Right ventricle myocardium inferior (tissue), 1 donor: ENCODE measurements at regions of chr14 and their contacts with region 1.

Region 1: GRCh38 chr14:24806061-24806678 is 172.2 kb upstream of the GZMB start:
- DNase-seq: no peak
- ATAC-seq: peak; percentile 67

Region 2: GRCh38 chr14:24518851-24519250 is 287.3 kb before region 1 on chr14:
- intact Hi-C with region 1: no loop called
- DNase-seq: no peak
- ATAC-seq: no peak

Region 3: GRCh38 chr14:25132732-25133422 is 326.7 kb after region 1 on chr14:
- intact Hi-C with region 1: loop called (anchors 2 kb)
- DNase-seq: peak; percentile 76
- ATAC-seq: peak; percentile 98

Region 4: GRCh38 chr14:25150934-25151790 is 345.0 kb after region 1 on chr14:
- intact Hi-C with region 1: loop called (anchors 1 kb)
- DNase-seq: no peak
- ATAC-seq: no peak